Caco-2 (cell line): ENCODE measurements at regions of chr17 and their contacts with region 1.

Region 1: DNA sequence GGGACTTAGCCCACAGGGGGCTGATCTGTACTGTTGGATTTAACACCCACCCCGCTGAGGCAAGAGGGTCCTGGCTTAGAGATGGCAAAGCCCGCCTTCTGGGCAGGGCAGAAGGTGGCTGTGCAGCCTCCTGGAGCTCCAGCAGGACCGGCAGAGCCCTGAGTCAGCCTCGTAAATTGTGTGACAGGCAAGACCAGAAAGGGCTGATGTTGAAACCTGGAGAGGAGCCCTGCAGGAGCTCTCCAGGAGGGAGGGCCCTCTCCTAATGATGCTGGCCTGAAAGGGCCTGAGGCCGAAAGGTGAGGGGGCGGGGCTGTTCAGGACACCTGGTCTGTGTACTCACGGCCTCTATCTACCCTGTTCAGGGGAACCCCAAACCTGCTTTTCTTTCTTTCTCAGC is 22.5 kb upstream of the MYO15B start:
- DNase-seq: peak; percentile 79
- H3K4me3 ChIP-seq: no peak overlapping the region
- H3K4me3 Mint-ChIP-seq: no peak overlapping the region
- H3K27ac Mint-ChIP-seq: peak overlapping the region; percentile 58
- H3K4me1 ChIP-seq: peaks cover 8% of the 10 kb centered on the region; the same call in 1 of the 2 replicates
- H3K4me1 Mint-ChIP-seq: no peaks in the 10 kb centered on the region
- H3K27me3 ChIP-seq: no peaks in the 10 kb centered on the region
- H3K27me3 Mint-ChIP-seq: no peaks in the 10 kb centered on the region
- CTCF ChIP-seq: no peak

Region 2: GRCh38 chr17:75535119-75535537 is 29.9 kb before region 1 on chr17:
- CTCF ChIA-PET with region 1: no interaction called
- POLR2A ChIA-PET with region 1: no interaction called
- intact Hi-C with region 1: loop called (anchors 2 kb)
- DNase-seq: peak in 1 of 2 experiments; percentile 52
- H3K4me3 ChIP-seq: no peak overlapping the region
- H3K4me3 Mint-ChIP-seq: peak overlapping the region; percentile 63
- H3K27ac Mint-ChIP-seq: peak overlapping the region; percentile 95
- H3K4me1 ChIP-seq: peaks cover 68% of the 10 kb centered on the region
- H3K4me1 Mint-ChIP-seq: peaks cover 52% of the 10 kb centered on the region
- H3K27me3 ChIP-seq: no peaks in the 10 kb centered on the region
- H3K27me3 Mint-ChIP-seq: no peaks in the 10 kb centered on the region
- CTCF ChIP-seq: no peak